GM12878 (cell line): ENCODE measurements at regions of chr12 and their contacts with region 1.

Region 1: GRCh38 chr12:110600254-110600653 is 13.7 kb upstream of the TCTN1 start:
- DNase-seq: no peak
- ATAC-seq: peak; percentile 61
- H3K4me3 ChIP-seq: no peak overlapping the region
- H3K27ac ChIP-seq: no peak overlapping the region
- H3K4me1 ChIP-seq: peaks cover 13% of the 10 kb centered on the region
- H3K27me3 ChIP-seq: no peaks in the 10 kb centered on the region
- CTCF ChIP-seq: peak; percentile 18 to 69 (median 42); a peak in 4 of 6 replicates
- EP300 ChIP-seq: no peak
- POLR2A ChIP-seq: no peak
- RAD21 ChIP-seq: peak; percentile 85

Region 2: GRCh38 chr12:110100315-110100970 is 499.8 kb before region 1 on chr12:
- CTCF ChIA-PET with region 1: interaction called, 18 read pairs
- POLR2A ChIA-PET with region 1: no interaction called
- RAD21 ChIA-PET with region 1: interaction called, 4 read pairs
- SMC1A ChIA-PET with region 1: interaction called, 15 read pairs
- in situ Hi-C with region 1: no loop called
- intact Hi-C with region 1: loop called (anchors 2 kb)
- DNase-seq: peak; percentile 93
- ATAC-seq: peak; percentile 93
- H3K4me3 ChIP-seq: no peak overlapping the region
- H3K27ac ChIP-seq: peak overlapping the region; percentile 49
- H3K4me1 ChIP-seq: peaks cover 9% of the 10 kb centered on the region; the same call in 1 of the 2 replicates
- H3K27me3 ChIP-seq: no peaks in the 10 kb centered on the region
- CTCF ChIP-seq: peak; percentile 85 to 92 (median 85)
- EP300 ChIP-seq: peak in 1 of 2 experiments; percentile 30; a peak in 1 of 4 replicates
- POLR2A ChIP-seq: no peak
- RAD21 ChIP-seq: peak; percentile 96

Region 3: GRCh38 chr12:110458756-110459155 is 141.5 kb before region 1 on chr12:
- CTCF ChIA-PET with region 1: interaction called, 237 read pairs
- POLR2A ChIA-PET with region 1: interaction called, 5 read pairs
- RAD21 ChIA-PET with region 1: interaction called, 180 read pairs
- SMC1A ChIA-PET with region 1: interaction called, 152 read pairs
- in situ Hi-C with region 1: no loop called
- intact Hi-C with region 1: no loop called
- DNase-seq: no peak
- ATAC-seq: no peak
- H3K4me3 ChIP-seq: no peak overlapping the region
- H3K27ac ChIP-seq: no peak overlapping the region
- H3K4me1 ChIP-seq: peaks cover 17% of the 10 kb centered on the region
- H3K27me3 ChIP-seq: no peaks in the 10 kb centered on the region
- CTCF ChIP-seq: no peak
- EP300 ChIP-seq: no peak
- POLR2A ChIP-seq: no peak
- RAD21 ChIP-seq: no peak

Region 4: GRCh38 chr12:110513842-110514241 is 86.4 kb before region 1 on chr12:
- CTCF ChIA-PET with region 1: interaction called, 462 read pairs
- POLR2A ChIA-PET with region 1: interaction called, 31 read pairs
- RAD21 ChIA-PET with region 1: interaction called, 153 read pairs
- SMC1A ChIA-PET with region 1: interaction called, 492 read pairs
- in situ Hi-C with region 1: loop called (anchors 5 kb)
- intact Hi-C with region 1: loop called (anchors 1 kb)
- DNase-seq: no peak
- ATAC-seq: no peak
- H3K4me3 ChIP-seq: no peak overlapping the region
- H3K27ac ChIP-seq: no peak overlapping the region
- H3K4me1 ChIP-seq: no peaks in the 10 kb centered on the region
- H3K27me3 ChIP-seq: no peaks in the 10 kb centered on the region
- CTCF ChIP-seq: no peak
- EP300 ChIP-seq: no peak
- POLR2A ChIP-seq: no peak
- RAD21 ChIP-seq: no peak

Region 5: DNA sequence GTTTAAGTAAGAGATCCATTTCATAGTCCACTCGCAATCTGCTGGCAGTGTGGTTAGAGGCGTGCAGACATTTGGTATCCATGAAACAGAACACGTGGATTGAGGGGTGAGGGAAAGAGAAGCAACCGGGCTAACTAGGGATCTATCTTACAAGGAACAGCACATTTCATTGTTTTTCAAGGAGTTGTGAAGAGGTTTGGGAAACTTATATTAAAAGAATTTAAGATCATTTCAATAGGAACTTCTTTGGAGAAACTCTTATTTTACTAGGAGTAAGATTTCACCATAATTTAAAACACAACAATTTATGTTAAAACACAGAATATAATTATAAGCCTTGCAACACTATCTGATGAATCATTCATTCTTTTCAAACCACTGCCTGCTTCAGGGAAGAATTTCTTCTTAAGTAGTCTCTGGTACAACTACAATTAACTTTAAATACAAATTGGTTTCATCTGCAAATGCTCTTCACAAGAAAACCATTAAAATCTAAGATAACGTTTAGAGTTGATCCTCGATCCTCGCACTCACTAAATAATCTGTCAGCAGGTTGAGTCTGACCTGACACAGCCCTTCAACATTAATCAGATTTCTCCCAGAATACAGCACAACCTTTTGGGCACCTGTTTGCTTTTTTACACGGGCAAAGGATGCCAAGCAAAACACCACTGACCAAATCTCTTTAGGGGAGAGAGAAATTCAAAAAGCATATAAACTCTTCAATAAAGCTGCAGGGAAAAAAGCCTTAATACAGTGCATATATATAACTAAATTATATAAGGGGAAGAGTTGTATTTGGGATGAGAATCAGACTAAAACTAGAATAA is 44.5 kb before region 1 on chr12:
- CTCF ChIA-PET with region 1: interaction called, 110 read pairs
- POLR2A ChIA-PET with region 1: interaction called, 3 read pairs
- RAD21 ChIA-PET with region 1: interaction called, 35 read pairs
- SMC1A ChIA-PET with region 1: interaction called, 92 read pairs
- in situ Hi-C with region 1: no loop called
- intact Hi-C with region 1: loop called (anchors 1 kb)
- DNase-seq: no peak
- ATAC-seq: no peak
- H3K4me3 ChIP-seq: no peak overlapping the region
- H3K27ac ChIP-seq: no peak overlapping the region
- H3K4me1 ChIP-seq: peaks cover 4% of the 10 kb centered on the region
- H3K27me3 ChIP-seq: no peaks in the 10 kb centered on the region
- CTCF ChIP-seq: no peak
- EP300 ChIP-seq: no peak
- POLR2A ChIP-seq: no peak
- RAD21 ChIP-seq: no peak

Region 6: GRCh38 chr12:110613771-110614684 is 13.8 kb after region 1 on chr12 and contains the start of gene TCTN1:
- CTCF ChIA-PET with region 1: interaction called, 11 read pairs
- POLR2A ChIA-PET with region 1: interaction called, 12 read pairs
- RAD21 ChIA-PET with region 1: interaction called, 14 read pairs
- SMC1A ChIA-PET with region 1: interaction called, 22 read pairs
- in situ Hi-C with region 1: no loop called
- intact Hi-C with region 1: no loop called
- DNase-seq: peak; percentile 70
- ATAC-seq: peak; percentile 99
- H3K4me3 ChIP-seq: peak within 1 kb of the TSS; percentile 58
- H3K27ac ChIP-seq: peak within 1 kb of the TSS; percentile 64
- H3K4me1 ChIP-seq: peaks cover 17% of the 10 kb centered on the region
- H3K27me3 ChIP-seq: no peaks in the 10 kb centered on the region
- CTCF ChIP-seq: no peak
- EP300 ChIP-seq: no peak
- POLR2A ChIP-seq: peak; percentile 95
- RAD21 ChIP-seq: no peak
- polyA plus RNA-seq, gene TCTN1: 8.8 to 10.2 TPM

Region 7: DNA sequence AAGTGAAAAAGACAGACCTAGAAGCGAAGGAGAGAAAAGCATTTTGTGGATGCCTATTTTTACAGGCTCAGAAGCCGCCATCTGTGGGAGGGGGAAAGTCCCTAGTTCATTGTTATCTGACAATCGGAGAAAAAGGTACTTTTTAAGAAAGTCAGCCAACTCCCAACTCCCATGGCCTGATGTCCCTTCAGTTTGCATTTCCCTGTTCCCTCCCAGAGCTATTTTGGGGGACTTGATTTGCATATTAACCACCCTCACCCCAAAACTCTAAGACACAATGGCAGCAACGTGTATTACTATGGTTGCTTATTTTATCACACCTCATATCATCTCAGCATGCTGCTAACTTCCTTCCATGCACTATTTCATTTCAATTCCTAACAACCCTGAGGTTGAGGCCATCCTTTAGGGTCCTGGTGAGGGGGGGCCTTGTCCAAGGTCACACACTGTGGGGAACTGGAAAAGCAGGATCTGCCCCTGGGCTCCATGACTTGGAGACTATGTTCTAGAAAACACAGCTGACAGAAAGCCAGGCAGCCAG is 70.0 kb after region 1 on chr12:
- CTCF ChIA-PET with region 1: interaction called, 9 read pairs
- POLR2A ChIA-PET with region 1: interaction called, 5 read pairs
- RAD21 ChIA-PET with region 1: interaction called, 15 read pairs
- SMC1A ChIA-PET with region 1: interaction called, 14 read pairs
- in situ Hi-C with region 1: no loop called
- intact Hi-C with region 1: no loop called
- DNase-seq: peak; percentile 95
- ATAC-seq: peak; percentile 63
- H3K4me3 ChIP-seq: peak overlapping the region; percentile 82; the same call in 1 of the 2 replicates
- H3K27ac ChIP-seq: peak overlapping the region; percentile 99
- H3K4me1 ChIP-seq: peaks cover 76% of the 10 kb centered on the region
- H3K27me3 ChIP-seq: no peaks in the 10 kb centered on the region
- CTCF ChIP-seq: no peak
- EP300 ChIP-seq: peak; percentile 81 to 95
- POLR2A ChIP-seq: no peak; the same call in 1 of the 2 replicates
- RAD21 ChIP-seq: 0 out of 2 replicates have a peak, but pooled peaks have one; percentile 6

Region 8: GRCh38 chr12:111093428-111094142 is 493.3 kb after region 1 on chr12:
- CTCF ChIA-PET with region 1: no interaction called
- POLR2A ChIA-PET with region 1: no interaction called
- RAD21 ChIA-PET with region 1: no interaction called
- SMC1A ChIA-PET with region 1: no interaction called
- in situ Hi-C with region 1: no loop called
- intact Hi-C with region 1: no loop called
- DNase-seq: peak; percentile 21
- ATAC-seq: peak; percentile 38; the same call in 1 of the 3 replicates
- H3K4me3 ChIP-seq: no peak overlapping the region
- H3K27ac ChIP-seq: no peak overlapping the region
- H3K4me1 ChIP-seq: peaks cover 15% of the 10 kb centered on the region
- H3K27me3 ChIP-seq: no peaks in the 10 kb centered on the region; a peak in 2 of 4 replicates
- CTCF ChIP-seq: no peak
- EP300 ChIP-seq: no peak
- POLR2A ChIP-seq: no peak
- RAD21 ChIP-seq: peak; percentile 11; the same call in 1 of the 2 replicates

Region 9: GRCh38 chr12:111149299-111149698 is 549.0 kb after region 1 on chr12:
- CTCF ChIA-PET with region 1: no interaction called
- POLR2A ChIA-PET with region 1: no interaction called
- RAD21 ChIA-PET with region 1: no interaction called
- SMC1A ChIA-PET with region 1: no interaction called
- in situ Hi-C with region 1: no loop called
- intact Hi-C with region 1: no loop called
- DNase-seq: no peak
- ATAC-seq: no peak
- H3K4me3 ChIP-seq: no peak overlapping the region
- H3K27ac ChIP-seq: no peak overlapping the region
- H3K4me1 ChIP-seq: no peaks in the 10 kb centered on the region
- H3K27me3 ChIP-seq: peaks cover 1 to 2% of the 10 kb centered on the region in 2 experiments; a peak in 3 of 4 replicates
- CTCF ChIP-seq: peak in 2 of 3 experiments; percentile 7 to 13; a peak in 1 of 6 replicates
- EP300 ChIP-seq: no peak
- POLR2A ChIP-seq: no peak
- RAD21 ChIP-seq: peak; percentile 39; the same call in 1 of the 2 replicates